ENCODE measurements at regions of chr2 and their contacts with region 1.

Region 1: GRCh38 chr2:71157124-71157793 is 26.8 kb downstream of the MPHOSPH10 start:
- DNase-seq: peak; percentile 79
- ATAC-seq: peak; percentile 81
- H3K4me3 Mint-ChIP-seq: no peak overlapping the region
- H3K27ac Mint-ChIP-seq: no peak overlapping the region
- H3K4me1 Mint-ChIP-seq: peaks cover 3% of the 10 kb centered on the region
- H3K27me3 Mint-ChIP-seq: peaks cover 12% of the 10 kb centered on the region
- CTCF ChIP-seq: peak; percentile 81

Region 2: DNA sequence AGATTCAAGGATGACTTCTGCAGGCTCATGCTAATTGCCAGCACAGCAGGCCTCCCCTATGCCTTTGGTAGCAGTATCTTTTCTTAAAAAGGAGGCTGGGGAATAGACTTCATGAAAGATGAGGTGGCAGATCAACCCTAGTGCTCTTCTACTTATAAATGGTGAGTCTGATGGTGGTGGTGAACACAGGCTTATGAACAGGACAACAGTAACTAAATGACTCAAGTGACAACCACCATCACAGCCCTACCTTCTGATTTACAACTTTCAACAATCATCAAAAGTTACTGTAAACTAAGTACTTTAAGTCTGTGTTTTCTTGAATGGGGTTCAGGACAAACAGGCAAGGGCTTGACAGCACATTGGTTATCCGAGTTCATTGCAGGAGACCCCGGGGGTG is 30.3 kb after region 1 on chr2:
- CTCF ChIA-PET with region 1: interaction called, 11 read pairs
- POLR2A ChIA-PET with region 1: no interaction called
- intact Hi-C with region 1: no loop called
- DNase-seq: no peak
- ATAC-seq: no peak
- H3K4me3 Mint-ChIP-seq: no peak overlapping the region
- H3K27ac Mint-ChIP-seq: no peak overlapping the region
- H3K4me1 Mint-ChIP-seq: peaks cover 3% of the 10 kb centered on the region
- H3K27me3 Mint-ChIP-seq: no peaks in the 10 kb centered on the region
- CTCF ChIP-seq: no peak

Region 3: DNA sequence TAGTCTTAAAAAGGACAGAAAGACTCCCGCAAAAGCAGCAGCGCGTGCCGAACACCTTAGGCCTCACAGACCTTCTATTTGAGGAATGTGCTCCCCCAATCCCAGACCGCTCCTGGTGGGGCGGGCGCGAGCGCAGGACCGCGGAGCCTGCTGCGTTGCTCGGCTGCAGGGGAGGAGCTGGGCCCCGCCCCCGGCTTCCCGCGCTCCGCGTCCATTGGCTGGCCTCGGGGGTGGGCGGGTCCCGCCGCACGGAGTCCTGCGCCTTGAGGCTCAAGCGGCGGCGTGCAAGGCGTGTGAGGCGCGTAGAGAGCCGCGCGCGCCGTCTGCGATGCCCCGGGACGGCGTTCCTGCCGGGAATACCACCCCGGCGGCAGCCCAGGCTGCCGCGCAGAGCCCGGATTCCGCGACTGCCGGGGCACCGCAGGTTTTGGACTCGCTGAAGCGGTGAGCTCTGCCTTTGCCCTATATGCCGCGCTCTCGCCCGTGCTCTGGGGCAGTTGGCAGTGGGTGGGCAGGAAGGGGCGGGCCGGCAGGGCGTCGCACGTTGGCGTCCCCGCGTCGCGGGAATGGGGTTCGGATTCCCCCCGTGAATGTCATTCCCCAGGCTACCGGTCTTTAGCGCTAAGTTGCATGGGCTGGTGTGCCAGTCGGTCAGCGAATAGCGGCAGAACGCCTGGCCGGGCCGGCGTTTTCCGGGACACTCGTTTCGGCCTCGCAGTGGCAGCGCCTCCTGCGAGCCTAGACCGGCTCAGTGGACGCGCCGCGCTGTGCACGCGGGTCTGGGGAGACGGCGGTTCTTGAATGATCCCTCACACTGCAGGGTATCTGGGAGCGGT is 119.3 kb after region 1 on chr2:
- CTCF ChIA-PET with region 1: interaction called, 3 read pairs
- POLR2A ChIA-PET with region 1: no interaction called
- intact Hi-C with region 1: loop called (anchors 10 kb)
- DNase-seq: peak; percentile 89
- ATAC-seq: peak; percentile 99
- H3K4me3 Mint-ChIP-seq: peak overlapping the region; percentile 75
- H3K27ac Mint-ChIP-seq: no peak overlapping the region
- H3K4me1 Mint-ChIP-seq: peaks cover 7% of the 10 kb centered on the region
- H3K27me3 Mint-ChIP-seq: peaks cover 73% of the 10 kb centered on the region
- CTCF ChIP-seq: no peak

Region 4: DNA sequence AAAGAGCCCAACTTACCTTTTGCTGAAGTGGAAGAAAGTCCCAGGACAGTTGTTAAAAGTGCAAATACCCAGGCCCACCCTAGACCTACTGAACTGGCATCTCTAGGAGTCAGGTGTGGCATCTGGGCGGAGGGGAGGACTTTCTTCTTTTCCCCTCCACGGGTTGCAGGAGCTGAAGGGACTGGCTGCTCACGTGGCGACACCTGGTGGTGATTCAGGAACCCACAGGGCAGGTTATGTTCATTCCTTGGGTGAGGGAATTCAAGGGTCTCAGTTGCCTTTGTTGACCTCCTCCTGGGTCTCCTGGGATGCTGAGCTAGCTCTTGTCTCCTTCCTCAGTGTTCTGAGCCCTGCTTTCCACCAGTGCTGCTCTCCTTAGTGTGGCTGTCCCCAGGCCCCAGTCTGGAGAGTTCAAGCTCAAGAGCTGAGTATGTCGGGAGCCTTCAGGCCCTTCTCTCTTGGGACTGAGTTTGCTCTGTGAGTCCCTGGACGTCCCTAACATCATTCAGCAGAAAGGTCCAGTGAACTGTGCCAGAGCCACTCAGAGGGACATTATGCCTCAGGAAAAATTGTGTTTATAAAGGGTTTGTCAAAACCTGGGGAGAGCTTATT is 353.0 kb after region 1 on chr2:
- CTCF ChIA-PET with region 1: interaction called, 6 read pairs
- POLR2A ChIA-PET with region 1: no interaction called
- intact Hi-C with region 1: loop called (anchors 5 kb)
- DNase-seq: peak; percentile 82
- ATAC-seq: peak; percentile 74
- H3K4me3 Mint-ChIP-seq: no peak overlapping the region
- H3K27ac Mint-ChIP-seq: no peak overlapping the region
- H3K4me1 Mint-ChIP-seq: no peaks in the 10 kb centered on the region
- H3K27me3 Mint-ChIP-seq: peaks cover 2% of the 10 kb centered on the region
- CTCF ChIP-seq: peak; percentile 80